ENCODE measurements at regions of chr3 and their contacts with region 1.

Region 1: DNA sequence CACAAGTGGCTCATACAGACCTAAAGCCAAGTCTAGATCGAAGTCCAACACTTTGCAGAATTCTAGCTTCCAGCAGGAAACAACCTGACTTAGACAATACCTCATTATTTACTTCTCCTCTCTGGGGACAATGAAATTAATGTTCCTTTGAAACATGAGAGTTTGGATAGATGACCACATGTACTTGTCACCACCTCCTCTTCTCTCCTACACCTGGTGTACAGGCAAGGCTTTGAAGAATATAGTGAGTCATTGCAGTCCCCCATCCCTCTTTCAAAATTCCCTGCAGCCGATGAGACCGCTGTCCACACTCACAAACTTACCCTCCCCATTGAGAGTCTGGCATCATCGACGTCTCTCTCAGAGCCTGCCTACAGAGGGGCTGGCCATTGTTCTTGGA is 189.0 kb upstream of the HES1 start:
- DNase-seq: peak; percentile 83 to 87
- H3K4me3 ChIP-seq: no peak overlapping the region
- H3K27ac ChIP-seq: no peak overlapping the region
- H3K4me1 ChIP-seq: peaks cover 16% of the 10 kb centered on the region
- H3K27me3 ChIP-seq: no peaks in the 10 kb centered on the region
- CTCF ChIP-seq: no peak

Region 2: GRCh38 chr3:192892981-192893700 is 1053.8 kb before region 1 on chr3:
- CTCF ChIA-PET with region 1: no interaction called
- POLR2A ChIA-PET with region 1: no interaction called
- intact Hi-C with region 1: loop called (anchors 10 kb)
- DNase-seq: peak; percentile 89 to 99
- H3K4me3 ChIP-seq: peak overlapping the region; percentile 44; the same call in 1 of the 2 replicates
- H3K27ac ChIP-seq: peak overlapping the region; percentile 88
- H3K4me1 ChIP-seq: peaks cover 96% of the 10 kb centered on the region
- H3K27me3 ChIP-seq: no peaks in the 10 kb centered on the region
- CTCF ChIP-seq: no peak

Region 3: DNA sequence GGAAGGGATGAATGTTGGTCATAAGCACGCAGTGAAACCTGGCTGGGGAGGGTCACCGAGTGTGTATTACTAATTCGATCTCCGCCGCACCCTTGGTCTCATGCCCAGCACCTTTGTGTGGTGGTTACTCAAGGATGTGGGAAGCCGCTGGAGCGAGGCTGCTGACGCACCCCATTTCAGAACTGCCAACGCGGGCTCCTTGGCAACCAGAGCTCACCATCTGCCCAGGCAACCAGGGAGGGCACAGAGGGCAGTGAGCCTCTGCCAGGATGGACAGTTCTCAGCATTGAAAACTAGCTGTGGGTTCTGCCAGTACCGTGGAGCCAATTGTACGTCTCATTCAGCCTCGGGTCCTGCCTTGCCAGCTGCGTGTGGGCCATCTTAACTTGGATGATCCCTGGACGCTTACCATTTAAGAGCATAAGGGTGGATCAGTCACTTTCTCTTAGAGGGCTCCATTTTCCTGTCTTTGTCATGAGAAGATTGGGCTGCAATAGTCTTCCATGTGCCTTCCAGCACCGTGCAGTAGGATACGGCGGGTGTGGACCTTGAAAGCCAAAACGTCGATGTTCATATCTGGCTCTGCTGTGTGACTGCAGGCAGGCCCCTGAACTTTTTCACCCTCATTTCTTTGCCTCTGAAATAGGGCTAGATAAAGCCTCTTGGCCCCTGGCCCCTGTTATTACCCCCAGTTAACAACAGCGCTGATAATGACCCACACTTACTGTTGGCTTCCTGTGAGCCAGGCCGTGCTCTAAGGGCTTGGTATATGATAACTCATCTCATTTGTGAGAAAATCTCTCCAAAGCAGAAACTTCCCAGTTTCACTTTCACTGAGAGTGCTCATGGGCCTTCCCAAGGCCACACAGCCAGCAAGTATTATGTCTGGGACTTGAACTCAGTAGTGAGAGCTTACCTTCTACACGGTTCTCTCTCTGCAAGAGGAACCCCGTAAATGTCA is 115.2 kb before region 1 on chr3:
- CTCF ChIA-PET with region 1: no interaction called
- POLR2A ChIA-PET with region 1: no interaction called
- intact Hi-C with region 1: loop called (anchors 1 kb)
- DNase-seq: peak; percentile 87 to 97
- H3K4me3 ChIP-seq: no peak overlapping the region
- H3K27ac ChIP-seq: peak overlapping the region; percentile 96
- H3K4me1 ChIP-seq: peaks cover 89% of the 10 kb centered on the region
- H3K27me3 ChIP-seq: no peaks in the 10 kb centered on the region
- CTCF ChIP-seq: no peak

Region 4: DNA sequence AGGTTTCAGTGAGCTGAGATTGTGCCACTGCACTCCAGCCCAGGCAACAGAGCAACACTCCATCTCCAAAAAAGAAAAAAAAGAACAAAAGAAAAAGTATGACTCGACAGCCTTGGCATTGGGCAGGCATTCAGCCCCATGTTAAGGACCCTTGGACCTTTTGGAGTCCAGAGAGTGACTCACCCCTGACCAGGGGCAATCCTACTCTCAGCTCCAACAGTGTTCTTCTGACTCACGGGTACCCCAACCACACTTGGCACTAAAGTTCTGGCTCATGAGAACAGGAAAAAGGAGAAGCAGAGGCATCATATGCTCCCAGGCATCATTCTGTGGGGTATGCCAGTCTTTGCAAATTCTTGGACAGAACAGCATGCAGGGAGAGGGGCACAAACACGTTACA is 63.4 kb before region 1 on chr3:
- CTCF ChIA-PET with region 1: interaction called, 3 read pairs
- POLR2A ChIA-PET with region 1: no interaction called
- intact Hi-C with region 1: loop called (anchors 1 kb)
- DNase-seq: peak; percentile 58 to 85
- H3K4me3 ChIP-seq: no peak overlapping the region
- H3K27ac ChIP-seq: peak overlapping the region; percentile 81
- H3K4me1 ChIP-seq: peaks cover 88% of the 10 kb centered on the region
- H3K27me3 ChIP-seq: no peaks in the 10 kb centered on the region
- CTCF ChIP-seq: no peak

Region 5: GRCh38 chr3:193971261-193971751 is 24.4 kb after region 1 on chr3:
- CTCF ChIA-PET with region 1: interaction called, 9 read pairs
- POLR2A ChIA-PET with region 1: interaction called, 4 read pairs
- intact Hi-C with region 1: loop called (anchors 1 kb)
- DNase-seq: peak; percentile 72 to 81
- H3K4me3 ChIP-seq: no peak overlapping the region
- H3K27ac ChIP-seq: no peak overlapping the region
- H3K4me1 ChIP-seq: peaks cover 48% of the 10 kb centered on the region
- H3K27me3 ChIP-seq: no peaks in the 10 kb centered on the region
- CTCF ChIP-seq: no peak

Region 6: GRCh38 chr3:194030369-194030768 is 83.4 kb after region 1 on chr3:
- CTCF ChIA-PET with region 1: interaction called, 9 read pairs
- POLR2A ChIA-PET with region 1: interaction called, 6 read pairs
- intact Hi-C with region 1: loop called (anchors 1 kb)
- DNase-seq: peak; percentile 69 to 88
- H3K4me3 ChIP-seq: no peak overlapping the region
- H3K27ac ChIP-seq: peak overlapping the region; percentile 40
- H3K4me1 ChIP-seq: peaks cover 53% of the 10 kb centered on the region
- H3K27me3 ChIP-seq: no peaks in the 10 kb centered on the region
- CTCF ChIP-seq: no peak

Region 7: GRCh38 chr3:194089357-194090177 is 142.6 kb after region 1 on chr3:
- CTCF ChIA-PET with region 1: no interaction called
- POLR2A ChIA-PET with region 1: no interaction called
- intact Hi-C with region 1: loop called (anchors 1 kb)
- DNase-seq: peak; percentile 98 to 100
- H3K4me3 ChIP-seq: peak overlapping the region; percentile 16; the same call in 1 of the 2 replicates
- H3K27ac ChIP-seq: peak overlapping the region; percentile 98
- H3K4me1 ChIP-seq: peaks cover 48% of the 10 kb centered on the region
- H3K27me3 ChIP-seq: no peaks in the 10 kb centered on the region
- CTCF ChIP-seq: no peak

Region 8: DNA sequence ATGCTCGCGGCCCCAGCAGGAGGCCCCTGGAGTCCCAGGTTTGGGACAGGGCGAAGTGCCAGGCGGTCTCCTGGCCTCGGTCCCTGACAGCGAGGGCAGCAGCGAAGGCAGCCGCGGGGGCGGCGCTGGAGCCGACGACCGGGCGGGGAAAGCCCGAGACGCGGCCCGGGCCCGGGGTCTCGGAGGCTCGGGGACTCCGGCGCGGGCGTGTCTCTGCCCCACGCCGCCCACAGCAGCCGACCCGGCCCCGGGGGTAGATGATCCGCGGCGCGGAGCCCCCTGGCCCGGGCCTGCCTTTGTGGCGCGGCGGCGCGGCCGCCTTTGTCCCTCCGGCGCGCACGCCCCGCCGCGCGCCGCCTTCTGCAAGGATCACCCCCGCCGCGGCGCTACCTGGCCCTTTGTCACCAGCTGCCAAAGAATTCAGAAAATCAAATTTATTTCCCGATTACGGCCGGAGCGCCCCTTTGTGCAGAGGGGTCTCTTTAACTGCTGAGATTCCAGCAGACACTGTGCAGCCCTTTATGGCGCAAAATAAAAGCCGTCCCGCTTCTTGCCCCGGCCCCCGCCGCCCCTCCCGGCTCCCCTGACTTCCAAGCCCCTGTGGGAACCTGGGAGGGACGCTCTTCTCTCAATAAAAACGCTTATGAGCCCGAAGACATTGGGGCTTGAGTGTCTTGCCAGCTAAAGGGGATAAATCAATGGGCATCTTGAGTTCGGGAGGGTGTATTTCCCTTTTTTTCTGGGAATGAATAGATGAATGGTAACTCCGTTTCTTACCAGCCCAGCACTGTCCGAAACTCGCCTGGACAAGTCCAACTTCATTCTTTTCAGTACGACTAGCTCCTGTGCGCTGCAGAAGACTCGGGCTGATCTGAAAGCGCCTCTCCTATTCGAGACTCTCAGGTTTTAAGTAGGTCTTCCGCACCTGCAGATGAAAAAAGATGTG is 257.4 kb after region 1 on chr3:
- CTCF ChIA-PET with region 1: no interaction called
- POLR2A ChIA-PET with region 1: no interaction called
- intact Hi-C with region 1: no loop called
- DNase-seq: peak; percentile 62 to 78
- H3K4me3 ChIP-seq: peak overlapping the region; percentile 58
- H3K27ac ChIP-seq: peak overlapping the region; percentile 71
- H3K4me1 ChIP-seq: peaks cover 47% of the 10 kb centered on the region
- H3K27me3 ChIP-seq: no peaks in the 10 kb centered on the region
- CTCF ChIP-seq: no peak

Measured in PC-9 (cell line).